Sciatic nerve (tissue), 2 donors: ENCODE measurements at regions of chr1 and their contacts with region 1.

Region 1: GRCh38 chr1:151294742-151295462 is 12.8 kb downstream of the ZNF687 start:
- DNase-seq: no peak
- ATAC-seq: no peak

Region 2: GRCh38 chr1:151281969-151282882 is 12.7 kb before region 1 on chr1 and contains the start of gene ZNF687:
- intact Hi-C with region 1: no loop called
- DNase-seq: peak; percentile 100
- ATAC-seq: peak; percentile 96
- total RNA-seq, gene ZNF687: 18.8 TPM

Region 3: GRCh38 chr1:151340870-151341754 is 46.2 kb after region 1 on chr1:
- intact Hi-C with region 1: loop called (anchors 5 kb)
- DNase-seq: no peak
- ATAC-seq: peak; percentile 91

Region 4: DNA sequence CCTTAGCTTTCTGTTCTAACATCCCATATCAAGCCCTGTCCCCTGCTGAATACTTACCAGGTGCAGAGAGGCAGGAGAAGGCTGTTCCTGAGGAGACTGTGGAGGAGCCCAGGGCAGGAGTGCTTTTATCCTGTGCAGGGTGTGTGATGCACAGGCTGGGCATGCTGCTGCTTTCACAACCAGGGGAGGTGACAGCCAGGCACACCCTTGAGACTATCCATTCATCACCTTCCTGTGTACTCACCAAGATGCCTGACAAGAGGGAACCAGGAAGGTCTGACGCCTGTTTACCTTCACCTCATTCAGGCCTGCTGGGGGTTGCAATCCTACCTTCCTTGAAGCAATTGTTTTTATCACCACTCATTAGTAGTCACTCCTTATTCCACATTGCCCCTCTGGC is 1271.8 kb after region 1 on chr1 and contains the start of gene LCE3E:
- intact Hi-C with region 1: no loop called
- DNase-seq: no peak
- ATAC-seq: no peak
- total RNA-seq, gene LCE3E: not detected